ENCODE measurements at regions of chr3 and their contacts with region 1.

Region 1: DNA sequence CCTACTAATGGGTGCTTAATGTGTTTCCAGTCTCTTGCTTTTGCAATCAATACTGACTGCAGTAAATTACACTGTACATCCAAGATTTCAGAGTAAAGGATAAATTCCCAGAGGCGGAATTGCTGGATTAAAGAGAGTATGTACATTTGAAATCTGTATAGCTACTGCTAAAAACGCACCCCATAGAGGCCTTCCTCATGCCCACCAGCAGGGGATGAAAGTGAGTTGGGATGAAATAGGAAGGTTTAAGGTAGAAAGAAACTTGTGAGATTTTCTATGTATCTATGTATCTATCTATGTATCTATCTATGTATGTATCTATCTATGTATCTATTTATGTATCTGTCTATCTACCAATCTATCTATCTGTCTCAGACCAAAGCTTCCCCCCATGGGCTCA is 28.4 kb downstream of the TMEM44 start:
- DNase-seq: no peak
- ATAC-seq: no peak
- H3K4me3 ChIP-seq: no peak overlapping the region
- H3K27ac ChIP-seq: no peak overlapping the region
- H3K4me1 ChIP-seq: no peaks in the 10 kb centered on the region
- H3K27me3 ChIP-seq: no peaks in the 10 kb centered on the region

Region 2: DNA sequence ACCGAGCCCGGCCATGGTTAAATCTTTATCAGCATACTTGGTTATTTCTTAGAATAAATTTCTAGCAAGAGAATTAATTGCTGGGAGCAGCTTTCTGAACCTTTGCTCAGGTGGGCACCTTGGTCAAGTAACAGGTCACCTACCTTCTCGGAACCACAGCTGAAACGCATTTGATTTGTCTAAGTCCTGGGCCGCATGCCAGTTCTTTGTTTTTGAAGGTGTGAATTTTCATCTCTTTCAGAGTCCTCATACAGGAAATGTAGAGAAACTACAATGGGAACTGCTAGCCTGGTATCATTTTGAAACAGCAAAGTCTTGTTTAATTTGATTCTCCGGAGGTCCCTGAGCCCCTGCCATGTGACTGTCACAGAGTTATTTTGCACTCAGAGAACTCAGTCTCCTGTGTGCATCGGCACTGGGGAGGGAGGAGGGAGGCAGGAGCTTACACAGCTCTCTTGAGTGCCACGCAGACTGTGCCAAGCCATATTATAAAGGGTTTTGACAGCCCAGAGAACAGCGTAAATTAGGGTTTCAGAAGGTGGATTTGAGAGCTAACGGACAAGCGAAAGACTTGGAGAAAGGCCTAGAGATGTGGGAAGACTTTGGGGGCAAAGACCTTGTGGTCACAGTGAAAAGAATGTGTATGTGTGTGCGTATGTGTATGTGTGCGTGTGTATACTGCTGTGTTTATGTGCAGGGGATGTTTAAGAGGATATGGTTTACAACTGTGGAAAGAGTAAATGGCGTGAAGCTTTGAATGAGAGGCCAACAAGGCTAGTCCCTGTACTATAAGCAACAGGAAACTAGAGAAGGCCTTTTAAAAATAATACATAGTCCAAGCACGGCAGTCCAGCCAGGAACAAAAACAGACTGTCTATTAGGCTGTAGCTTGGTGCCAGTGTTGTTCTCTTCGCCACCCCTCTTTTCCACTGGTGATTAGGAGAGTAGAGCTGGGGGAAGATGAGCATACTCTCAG is 56.2 kb before region 1 on chr3:
- intact Hi-C with region 1: loop called in 1 of 4 experiments (anchors 2 kb)
- DNase-seq: no peak
- ATAC-seq: peak; percentile 66 to 73
- H3K4me3 ChIP-seq: no peak overlapping the region
- H3K27ac ChIP-seq: peak overlapping the region; percentile 92
- H3K4me1 ChIP-seq: peaks cover 6% of the 10 kb centered on the region
- H3K27me3 ChIP-seq: no peaks in the 10 kb centered on the region

Region 3: GRCh38 chr3:194836661-194837060 is 231.8 kb after region 1 on chr3:
- intact Hi-C with region 1: no loop called
- DNase-seq: no peak
- ATAC-seq: no peak
- H3K4me3 ChIP-seq: no peak overlapping the region
- H3K27ac ChIP-seq: no peak overlapping the region
- H3K4me1 ChIP-seq: peaks cover 3% of the 10 kb centered on the region
- H3K27me3 ChIP-seq: no peaks in the 10 kb centered on the region

Measured in right cardiac atrium (tissue), 5 donors.